Posterior cingulate gyrus (tissue), 11 donors: ENCODE measurements at regions of chr1 and their contacts with region 1.

Region 1: GRCh38 chr1:160193091-160193819 is 2.9 kb downstream of the CASQ1 start:
- DNase-seq: peak; percentile 70 to 97 (median 92)

Region 2: DNA sequence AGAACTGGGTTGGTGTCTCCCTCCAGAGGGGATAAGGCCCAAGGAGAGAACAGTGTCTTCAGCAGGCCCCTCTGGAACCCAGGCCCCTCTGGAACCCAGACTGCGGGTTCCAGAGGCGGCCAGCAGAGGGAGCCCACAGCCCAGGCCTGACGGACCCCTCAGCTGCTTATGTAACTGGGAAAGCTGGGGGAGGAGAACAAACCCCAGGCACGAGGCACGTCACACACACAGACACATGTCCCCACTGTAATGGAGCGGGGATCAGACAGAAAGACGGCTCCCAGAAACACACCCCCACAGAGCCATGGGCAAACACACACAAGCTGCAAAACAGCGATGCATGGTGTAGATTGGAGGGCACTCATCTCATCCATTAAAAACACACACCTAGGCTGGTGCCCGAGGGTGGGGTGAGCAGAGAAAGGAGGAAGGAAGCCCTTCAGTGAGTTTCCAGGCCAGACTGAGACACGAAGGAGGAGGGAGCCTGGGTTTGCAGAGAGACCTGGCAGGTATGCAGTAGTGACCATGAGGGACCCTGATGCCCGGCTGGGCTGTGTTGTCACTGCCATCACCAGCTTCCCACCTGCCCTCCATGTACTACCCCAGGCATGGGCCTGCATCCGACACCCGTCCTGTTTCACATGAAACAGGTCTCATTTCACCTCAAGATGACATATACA is 92.1 kb before region 1 on chr1:
- intact Hi-C with region 1: loop called (anchors 5 kb)
- DNase-seq: peak; percentile 83 to 98 (median 90)

Region 3: GRCh38 chr1:160219062-160219929 is 26.0 kb after region 1 on chr1:
- intact Hi-C with region 1: loop called (anchors 1 kb)
- DNase-seq: peak in 8 of 10 donors; percentile 57 to 95 (median 78)

Region 4: GRCh38 chr1:160474392-160475242 is 281.4 kb after region 1 on chr1:
- intact Hi-C with region 1: no loop called
- DNase-seq: no peak